ENCODE measurements at regions of chr11 and their contacts with region 1.

Region 1: GRCh38 chr11:76680518-76681425 is 10.2 kb upstream of the LRRC32 start:
- ATAC-seq: peak; percentile 90 to 99 (median 94)
- H3K4me3 ChIP-seq: no peak overlapping the region
- H3K27ac ChIP-seq: no peak overlapping the region
- H3K4me1 ChIP-seq: peaks cover 2 to 4% of the 10 kb centered on the region in 2 donors

Region 2: GRCh38 chr11:76062733-76063132 is 618.0 kb before region 1 on chr11:
- in situ Hi-C with region 1: no loop called
- ATAC-seq: no peak
- H3K4me3 ChIP-seq: no peak overlapping the region
- H3K27ac ChIP-seq: no peak overlapping the region
- H3K4me1 ChIP-seq: no peaks in the 10 kb centered on the region

Region 3: DNA sequence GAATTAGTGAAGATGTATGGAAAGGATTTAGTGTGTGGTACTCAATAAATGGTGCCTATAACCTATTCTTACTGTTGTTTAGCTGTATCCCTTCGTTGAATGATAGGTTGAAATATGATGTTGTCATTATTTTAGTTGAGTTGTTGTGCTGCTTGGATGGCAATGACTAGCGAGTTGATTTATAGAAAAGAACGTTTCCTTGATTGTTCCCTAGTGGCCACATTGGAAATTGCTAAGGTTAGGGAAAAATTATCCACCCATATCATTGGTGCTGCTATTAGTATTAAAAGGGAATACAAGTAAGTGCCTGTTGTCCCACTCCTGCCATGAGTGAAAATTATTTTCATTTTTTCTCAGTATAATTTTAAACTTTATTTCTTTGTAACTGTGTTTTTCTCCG is 221.5 kb before region 1 on chr11:
- in situ Hi-C with region 1: no loop called
- ATAC-seq: no peak
- H3K4me3 ChIP-seq: no peak overlapping the region
- H3K27ac ChIP-seq: no peak overlapping the region
- H3K4me1 ChIP-seq: no peaks in the 10 kb centered on the region

Region 4: GRCh38 chr11:76598426-76598839 is 82.3 kb before region 1 on chr11:
- in situ Hi-C with region 1: loop called in 1 of 9 experiments (anchors 25 kb)
- ATAC-seq: peak in 6 of 8 experiments; percentile 39 to 85 (median 46)
- H3K4me3 ChIP-seq: no peak overlapping the region
- H3K27ac ChIP-seq: no peak overlapping the region
- H3K4me1 ChIP-seq: no peaks in the 10 kb centered on the region

Measured in motor neuron (in vitro differentiated cells).